ENCODE measurements at regions of chr2 and their contacts with region 1.

Region 1: DNA sequence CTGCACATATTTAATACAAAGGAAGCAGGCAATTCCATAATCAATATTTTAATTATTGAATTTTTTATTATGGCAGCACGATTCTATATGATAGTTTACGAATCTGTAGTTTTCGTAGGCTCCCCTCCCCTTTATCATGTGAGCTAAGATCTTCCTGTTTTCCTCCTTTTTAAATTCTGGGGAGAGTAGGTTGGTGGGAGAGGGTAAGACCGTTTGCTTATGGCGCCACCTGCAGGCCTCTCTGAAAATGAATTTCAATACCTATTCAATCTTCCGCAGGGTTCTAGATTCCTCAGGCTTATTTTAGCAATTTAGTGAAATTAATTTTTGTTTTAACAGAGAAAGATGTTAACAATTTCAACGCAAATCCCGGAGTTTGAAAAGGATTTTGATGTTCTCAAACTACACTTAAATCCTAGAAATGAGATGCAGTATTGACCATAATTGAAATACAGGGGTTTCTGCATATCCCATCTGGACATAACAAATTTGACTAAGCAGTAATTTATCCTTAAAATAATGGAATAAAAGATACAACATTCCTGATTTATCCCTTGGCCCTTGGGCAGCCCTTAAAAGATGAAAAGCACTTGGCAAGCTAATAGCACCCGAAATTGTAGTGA is 12.8 kb upstream of the GBX2 start:
- DNase-seq: no peak
- H3K4me3 ChIP-seq: no peak overlapping the region
- H3K27me3 ChIP-seq: no peaks in the 10 kb centered on the region
- CTCF ChIP-seq: peak; percentile 75

Region 2: DNA sequence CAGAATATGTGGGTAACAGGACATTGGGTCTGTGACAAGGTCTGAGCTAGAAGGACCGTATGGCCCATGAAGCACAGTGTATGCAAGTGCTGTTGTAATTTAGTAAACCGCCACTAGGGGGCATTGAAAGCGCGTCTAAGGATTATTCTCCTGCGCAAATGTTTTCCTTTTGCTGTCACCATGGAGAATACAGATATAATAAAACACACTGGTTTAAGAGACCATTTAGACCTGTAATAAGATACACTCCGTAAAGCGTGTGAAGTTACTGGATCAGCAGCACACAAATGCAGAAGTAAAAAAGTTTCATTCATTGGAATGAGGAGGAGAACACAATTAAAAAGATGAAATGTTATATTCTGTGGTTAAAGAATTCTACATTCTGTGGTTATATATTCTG is 414.7 kb before region 1 on chr2:
- CTCF ChIA-PET with region 1: interaction called, 36 read pairs
- POLR2A ChIA-PET with region 1: no interaction called
- DNase-seq: peak; percentile 57
- H3K4me3 ChIP-seq: no peak overlapping the region
- H3K27me3 ChIP-seq: no peaks in the 10 kb centered on the region
- CTCF ChIP-seq: peak; percentile 82

Region 3: GRCh38 chr2:235779444-235779896 is 401.5 kb before region 1 on chr2:
- CTCF ChIA-PET with region 1: interaction called, 198 read pairs
- POLR2A ChIA-PET with region 1: no interaction called
- DNase-seq: no peak
- H3K4me3 ChIP-seq: no peak overlapping the region
- H3K27me3 ChIP-seq: no peaks in the 10 kb centered on the region
- CTCF ChIP-seq: peak; percentile 94

Region 4: GRCh38 chr2:235784789-235785188 is 396.2 kb before region 1 on chr2:
- CTCF ChIA-PET with region 1: interaction called, 198 read pairs
- POLR2A ChIA-PET with region 1: no interaction called
- DNase-seq: no peak
- H3K4me3 ChIP-seq: no peak overlapping the region
- H3K27me3 ChIP-seq: no peaks in the 10 kb centered on the region
- CTCF ChIP-seq: no peak

Region 5: GRCh38 chr2:235958221-235958931 is 222.6 kb before region 1 on chr2:
- CTCF ChIA-PET with region 1: no interaction called
- POLR2A ChIA-PET with region 1: no interaction called
- DNase-seq: no peak
- H3K4me3 ChIP-seq: no peak overlapping the region
- H3K27me3 ChIP-seq: no peaks in the 10 kb centered on the region
- CTCF ChIP-seq: no peak

Region 6: GRCh38 chr2:236168110-236169067 is 12.6 kb before region 1 on chr2 and contains the start of gene GBX2:
- CTCF ChIA-PET with region 1: interaction called, 21 read pairs
- POLR2A ChIA-PET with region 1: interaction called, 3 read pairs
- DNase-seq: no peak
- H3K4me3 ChIP-seq: peak within 1 kb of the TSS; percentile 33
- H3K27me3 ChIP-seq: peaks cover 73% of the 10 kb centered on the region
- CTCF ChIP-seq: no peak
- polyA plus RNA-seq, gene GBX2: 0.11 TPM in 1 of 2 replicates, not detected in the other

Region 7: GRCh38 chr2:236193051-236193450 is 12.1 kb after region 1 on chr2:
- CTCF ChIA-PET with region 1: interaction called, 13 read pairs
- POLR2A ChIA-PET with region 1: interaction called, 3 read pairs
- DNase-seq: no peak
- H3K4me3 ChIP-seq: no peak overlapping the region
- H3K27me3 ChIP-seq: no peaks in the 10 kb centered on the region
- CTCF ChIP-seq: no peak

Region 8: GRCh38 chr2:236309669-236310029 is 128.7 kb after region 1 on chr2:
- CTCF ChIA-PET with region 1: no interaction called
- POLR2A ChIA-PET with region 1: no interaction called
- DNase-seq: no peak
- H3K4me3 ChIP-seq: no peak overlapping the region
- H3K27me3 ChIP-seq: no peaks in the 10 kb centered on the region
- CTCF ChIP-seq: peak; percentile 40

Region 9: DNA sequence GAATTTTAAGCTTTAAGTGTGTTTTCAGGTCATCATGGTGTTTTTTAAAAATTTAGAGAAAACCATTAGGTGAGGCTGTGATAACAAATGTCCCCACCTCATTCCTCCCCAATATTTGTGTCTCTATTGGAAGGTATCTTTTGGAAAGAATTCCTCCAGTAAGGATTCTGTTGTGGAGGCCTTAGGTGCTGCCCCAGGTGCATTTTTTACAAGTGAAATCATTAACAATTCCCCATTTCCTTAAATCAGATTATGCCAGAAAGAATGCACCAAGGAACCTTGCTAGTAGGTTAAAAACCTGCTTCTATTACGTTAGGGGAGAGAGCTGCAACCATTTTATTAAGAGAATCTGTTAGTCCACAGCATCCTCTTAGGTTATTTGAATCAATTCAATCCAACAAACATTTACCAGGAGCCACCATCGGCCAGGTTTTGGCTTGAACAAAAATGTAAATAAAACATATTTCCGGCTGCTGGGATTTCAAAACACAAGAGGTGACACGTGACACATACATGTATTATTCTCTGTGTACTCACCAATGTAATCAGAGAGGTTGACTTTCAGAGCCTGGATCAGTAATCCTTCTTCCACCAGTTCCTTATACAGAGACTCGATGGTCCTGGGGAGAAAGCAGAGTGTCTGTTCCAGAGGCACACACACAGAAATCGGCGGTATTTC is 195.8 kb after region 1 on chr2:
- CTCF ChIA-PET with region 1: no interaction called
- POLR2A ChIA-PET with region 1: no interaction called
- DNase-seq: no peak
- H3K4me3 ChIP-seq: no peak overlapping the region
- H3K27me3 ChIP-seq: no peaks in the 10 kb centered on the region
- CTCF ChIP-seq: no peak

Measured in BJ (cell line).